CD8-positive, alpha-beta T cell (primary cell): ENCODE measurements at regions of chr11 and their contacts with region 1.

Region 1: DNA sequence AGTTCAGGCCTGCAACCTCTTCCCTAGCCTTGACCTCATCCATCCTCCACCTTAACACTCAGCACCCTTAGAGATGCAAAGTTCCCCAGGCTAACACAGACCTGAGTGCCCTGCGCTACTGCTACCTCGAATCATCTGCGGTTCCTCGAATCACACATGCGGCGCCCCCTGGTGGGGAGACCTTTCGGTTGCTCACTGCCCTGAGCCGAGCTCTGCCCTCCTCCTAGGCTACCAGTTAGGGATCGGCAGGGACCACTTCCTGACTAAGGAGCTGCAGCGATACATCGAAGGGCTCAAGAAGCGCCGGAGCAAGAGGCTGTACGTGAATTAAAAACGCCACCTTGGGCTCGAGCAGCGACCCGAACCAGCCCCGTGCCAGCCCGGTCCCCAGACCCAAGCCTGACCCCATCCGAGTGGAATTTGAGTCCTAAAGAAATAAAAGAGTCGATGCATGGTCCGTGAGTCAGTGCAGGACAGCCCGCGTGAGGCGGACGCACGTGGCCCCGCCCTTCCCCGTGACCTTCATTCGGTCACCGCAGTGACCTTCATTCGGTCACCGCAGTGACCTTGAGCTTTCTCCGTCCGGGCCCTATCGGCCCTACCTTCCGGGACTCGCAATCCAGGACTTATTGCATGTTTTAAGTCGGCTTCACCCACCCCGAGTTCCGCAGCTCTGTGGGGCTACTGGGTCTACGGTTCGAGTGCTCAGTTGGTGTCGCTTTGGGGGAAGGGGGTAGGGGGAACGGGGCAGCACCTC is 830 bp upstream of the ESRRA start:
- DNase-seq: peak; percentile 89 to 98 (median 94)
- ATAC-seq: peak; percentile 18
- H3K4me3 ChIP-seq: peak overlapping the region; percentile 80 to 99
- H3K4me3 Mint-ChIP-seq: peak overlapping the region; percentile 92
- H3K27ac ChIP-seq: peak overlapping the region; percentile 96 to 98
- H3K27ac Mint-ChIP-seq: peak overlapping the region; percentile 97
- H3K4me1 ChIP-seq: peaks cover 50% of the 10 kb centered on the region
- H3K4me1 Mint-ChIP-seq: peaks cover 41% of the 10 kb centered on the region
- H3K27me3 ChIP-seq: peaks cover 13 to 21% of the 10 kb centered on the region in 2 experiments
- H3K27me3 Mint-ChIP-seq: peaks cover 19% of the 10 kb centered on the region
- CTCF ChIP-seq: peak; percentile 90

Region 2: GRCh38 chr11:64000026-64000739 is 304.3 kb before region 1 on chr11:
- CTCF ChIA-PET with region 1: interaction called, 8 read pairs
- POLR2A ChIA-PET with region 1: no interaction called
- intact Hi-C with region 1: loop called in 1 of 2 experiments (anchors 5 kb)
- DNase-seq: peak; percentile 45 to 88 (median 70)
- ATAC-seq: peak; percentile 79
- H3K4me3 ChIP-seq: peak overlapping the region; percentile 24 to 33
- H3K4me3 Mint-ChIP-seq: peak overlapping the region; percentile 56
- H3K27ac ChIP-seq: no peak overlapping the region
- H3K27ac Mint-ChIP-seq: no peak overlapping the region
- H3K4me1 ChIP-seq: peaks cover 17% of the 10 kb centered on the region
- H3K4me1 Mint-ChIP-seq: peaks cover 9% of the 10 kb centered on the region
- H3K27me3 ChIP-seq: no peaks in the 10 kb centered on the region
- H3K27me3 Mint-ChIP-seq: peaks cover 2% of the 10 kb centered on the region
- CTCF ChIP-seq: peak; percentile 82

Region 3: GRCh38 chr11:64204464-64204989 is 100.0 kb before region 1 on chr11:
- CTCF ChIA-PET with region 1: interaction called, 276 read pairs
- POLR2A ChIA-PET with region 1: interaction called, 43 read pairs
- intact Hi-C with region 1: loop called (anchors 1 kb)
- DNase-seq: peak; percentile 72 to 94 (median 87)
- ATAC-seq: peak; percentile 51
- H3K4me3 ChIP-seq: no peak overlapping the region
- H3K4me3 Mint-ChIP-seq: peak overlapping the region; percentile 63
- H3K27ac ChIP-seq: peak overlapping the region in 1 of 2 experiments; percentile 25
- H3K27ac Mint-ChIP-seq: peak overlapping the region; percentile 75
- H3K4me1 ChIP-seq: peaks cover 29% of the 10 kb centered on the region
- H3K4me1 Mint-ChIP-seq: peaks cover 37% of the 10 kb centered on the region
- H3K27me3 ChIP-seq: no peaks in the 10 kb centered on the region
- H3K27me3 Mint-ChIP-seq: no peaks in the 10 kb centered on the region
- CTCF ChIP-seq: peak; percentile 71

Region 4: DNA sequence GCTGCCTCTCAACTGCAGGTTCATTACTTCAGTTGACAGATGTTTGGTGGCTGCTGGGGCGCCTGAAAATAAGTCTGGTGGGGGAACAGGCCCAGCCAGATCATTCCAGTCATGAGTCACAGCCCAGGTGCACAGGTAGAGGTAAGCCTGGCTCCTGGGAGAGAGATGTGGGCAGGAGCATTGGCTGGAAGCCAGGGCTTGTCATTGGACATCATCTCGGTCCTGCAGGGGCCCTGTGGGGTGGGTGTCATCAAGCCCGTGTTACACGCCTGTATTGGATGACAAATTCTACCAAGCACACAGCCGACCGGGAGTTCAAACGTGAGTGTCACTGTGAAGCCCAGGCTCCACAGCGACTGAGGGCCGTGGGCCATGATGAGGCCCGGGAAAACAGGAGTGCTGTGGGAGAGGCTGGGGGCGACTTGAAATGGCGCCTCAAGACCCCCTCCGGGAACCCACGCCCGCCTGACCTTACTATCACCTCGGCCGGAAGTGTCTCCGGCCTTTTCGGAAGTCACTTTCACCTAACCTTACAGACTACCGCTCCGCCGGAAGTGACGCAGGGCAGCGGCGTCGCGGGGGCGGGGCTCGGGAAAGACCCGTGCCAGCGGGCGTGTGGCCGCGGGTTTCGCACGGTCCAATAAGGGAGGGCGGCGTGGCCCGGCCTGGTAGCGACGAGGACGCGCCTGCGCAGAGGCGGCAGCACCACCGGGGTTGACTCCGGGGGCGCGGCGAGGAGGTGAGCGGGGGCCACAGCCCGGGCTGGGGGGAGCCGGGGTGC is 63.9 kb before region 1 on chr11 and contains the start of gene FKBP2:
- CTCF ChIA-PET with region 1: interaction called, 152 read pairs
- POLR2A ChIA-PET with region 1: interaction called, 13 read pairs
- intact Hi-C with region 1: loop called (anchors 1 kb)
- DNase-seq: peak; percentile 94 to 100 (median 97)
- ATAC-seq: peak; percentile 63
- H3K4me3 ChIP-seq: peak within 1 kb of the TSS; percentile 80 to 97
- H3K4me3 Mint-ChIP-seq: peak within 1 kb of the TSS; percentile 90
- H3K27ac ChIP-seq: peak within 1 kb of the TSS; percentile 94 to 99
- H3K27ac Mint-ChIP-seq: peak within 1 kb of the TSS; percentile 100
- H3K4me1 ChIP-seq: peaks cover 29% of the 10 kb centered on the region
- H3K4me1 Mint-ChIP-seq: peaks cover 34% of the 10 kb centered on the region
- H3K27me3 ChIP-seq: no peaks in the 10 kb centered on the region
- H3K27me3 Mint-ChIP-seq: no peaks in the 10 kb centered on the region
- CTCF ChIP-seq: no peak
- total RNA-seq, gene FKBP2: 19.4 TPM

Region 5: GRCh38 chr11:64276653-64277431 is 27.7 kb before region 1 on chr11:
- CTCF ChIA-PET with region 1: interaction called, 82 read pairs
- POLR2A ChIA-PET with region 1: interaction called, 14 read pairs
- intact Hi-C with region 1: no loop called
- DNase-seq: no peak
- ATAC-seq: no peak
- H3K4me3 ChIP-seq: no peak overlapping the region
- H3K4me3 Mint-ChIP-seq: no peak overlapping the region
- H3K27ac ChIP-seq: no peak overlapping the region
- H3K27ac Mint-ChIP-seq: no peak overlapping the region
- H3K4me1 ChIP-seq: peaks cover 5% of the 10 kb centered on the region
- H3K4me1 Mint-ChIP-seq: peaks cover 4% of the 10 kb centered on the region
- H3K27me3 ChIP-seq: no peaks in the 10 kb centered on the region
- H3K27me3 Mint-ChIP-seq: no peaks in the 10 kb centered on the region
- CTCF ChIP-seq: no peak

Region 6: DNA sequence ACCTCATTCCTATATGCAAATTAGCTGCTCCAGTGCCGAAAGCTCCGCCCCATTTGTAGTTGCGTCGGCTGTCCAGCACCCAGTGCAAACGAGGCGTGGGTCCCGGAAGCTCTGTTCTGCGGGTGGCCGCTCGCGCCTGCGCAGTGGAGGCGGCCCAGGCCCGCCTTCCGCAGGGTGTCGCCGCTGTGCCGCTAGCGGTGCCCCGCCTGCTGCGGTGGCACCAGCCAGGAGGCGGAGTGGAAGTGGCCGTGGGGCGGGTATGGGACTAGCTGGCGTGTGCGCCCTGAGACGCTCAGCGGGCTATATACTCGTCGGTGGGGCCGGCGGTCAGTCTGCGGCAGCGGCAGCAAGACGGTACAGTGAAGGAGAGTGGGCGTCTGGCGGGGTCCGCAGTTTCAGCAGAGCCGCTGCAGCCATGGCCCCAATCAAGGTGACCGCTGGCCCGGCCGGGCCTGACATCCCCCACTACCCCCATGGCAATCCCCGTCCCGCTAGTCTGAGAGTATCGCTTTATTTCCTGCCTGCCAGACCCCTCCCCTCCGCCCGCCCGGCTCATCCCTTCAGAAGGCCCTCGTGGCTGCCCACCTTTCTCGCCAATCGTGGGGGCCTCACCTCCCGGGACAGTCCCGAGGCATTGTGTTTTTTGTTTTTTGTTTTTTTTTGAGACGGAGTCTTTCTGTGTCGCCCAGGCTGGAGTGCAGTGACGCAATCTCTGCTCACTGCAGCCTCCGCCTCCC is 13.6 kb after region 1 on chr11 and contains the start of gene PRDX5:
- CTCF ChIA-PET with region 1: interaction called, 16 read pairs
- POLR2A ChIA-PET with region 1: interaction called, 50 read pairs
- intact Hi-C with region 1: loop called (anchors 1 kb)
- DNase-seq: peak; percentile 90 to 99 (median 93)
- ATAC-seq: peak; percentile 75
- H3K4me3 ChIP-seq: peak within 1 kb of the TSS; percentile 66 to 69
- H3K4me3 Mint-ChIP-seq: peak within 1 kb of the TSS; percentile 89
- H3K27ac ChIP-seq: peak within 1 kb of the TSS; percentile 97 to 100
- H3K27ac Mint-ChIP-seq: peak within 1 kb of the TSS; percentile 99
- H3K4me1 ChIP-seq: peaks cover 8% of the 10 kb centered on the region
- H3K4me1 Mint-ChIP-seq: peaks cover 32% of the 10 kb centered on the region
- H3K27me3 ChIP-seq: no peaks in the 10 kb centered on the region
- H3K27me3 Mint-ChIP-seq: no peaks in the 10 kb centered on the region
- CTCF ChIP-seq: no peak
- total RNA-seq, gene PRDX5: 39.9 to 41.0 TPM

Region 7: GRCh38 chr11:64742889-64743590 is 438.5 kb after region 1 on chr11:
- CTCF ChIA-PET with region 1: no interaction called
- POLR2A ChIA-PET with region 1: no interaction called
- intact Hi-C with region 1: loop called in 1 of 2 experiments (anchors 5 kb)
- DNase-seq: peak; percentile 56 to 91 (median 77)
- ATAC-seq: peak; percentile 13
- H3K4me3 ChIP-seq: peak overlapping the region; percentile 78 to 89
- H3K4me3 Mint-ChIP-seq: peak overlapping the region; percentile 99
- H3K27ac ChIP-seq: peak overlapping the region; percentile 78 to 88
- H3K27ac Mint-ChIP-seq: no peak overlapping the region
- H3K4me1 ChIP-seq: peaks cover 31% of the 10 kb centered on the region
- H3K4me1 Mint-ChIP-seq: peaks cover 48% of the 10 kb centered on the region
- H3K27me3 ChIP-seq: no peaks in the 10 kb centered on the region
- H3K27me3 Mint-ChIP-seq: no peaks in the 10 kb centered on the region
- CTCF ChIP-seq: peak; percentile 90